ENCODE measurements at regions of chr7 and their contacts with region 1.

Region 1: GRCh38 chr7:66654123-66654732 is 25.5 kb downstream of the KCTD7 start:
- DNase-seq: peak; percentile 98
- ATAC-seq: peak; percentile 93
- H3K4me3 Mint-ChIP-seq: peak overlapping the region; percentile 97
- H3K27ac Mint-ChIP-seq: peak overlapping the region; percentile 97
- H3K4me1 Mint-ChIP-seq: peaks cover 14% of the 10 kb centered on the region
- H3K27me3 Mint-ChIP-seq: no peaks in the 10 kb centered on the region

Region 2: DNA sequence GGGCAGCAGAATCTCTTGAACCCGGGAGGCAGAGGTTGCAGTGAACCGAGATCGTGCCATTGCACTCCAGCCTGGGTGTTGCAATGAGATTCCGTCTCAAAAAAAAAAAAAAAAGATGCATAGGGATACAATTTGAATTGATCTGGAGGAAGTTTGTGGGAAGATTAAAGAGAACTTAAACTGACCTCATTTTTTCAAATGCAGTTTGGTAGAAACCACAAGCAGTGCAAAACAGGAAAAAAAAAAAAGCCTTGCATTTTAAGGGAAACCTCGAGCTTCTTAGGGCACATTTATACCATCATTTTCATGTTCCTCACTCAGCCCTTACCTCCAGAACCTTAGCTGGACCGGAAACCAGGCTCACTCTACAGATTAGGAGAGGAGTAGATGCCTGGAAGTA is 22.8 kb before region 1 on chr7:
- POLR2A ChIA-PET with region 1: interaction called, 17 read pairs
- DNase-seq: no peak
- ATAC-seq: no peak
- H3K4me3 Mint-ChIP-seq: peak overlapping the region; percentile 81
- H3K27ac Mint-ChIP-seq: peak overlapping the region; percentile 94
- H3K4me1 Mint-ChIP-seq: peaks cover 36% of the 10 kb centered on the region
- H3K27me3 Mint-ChIP-seq: no peaks in the 10 kb centered on the region

Region 3: DNA sequence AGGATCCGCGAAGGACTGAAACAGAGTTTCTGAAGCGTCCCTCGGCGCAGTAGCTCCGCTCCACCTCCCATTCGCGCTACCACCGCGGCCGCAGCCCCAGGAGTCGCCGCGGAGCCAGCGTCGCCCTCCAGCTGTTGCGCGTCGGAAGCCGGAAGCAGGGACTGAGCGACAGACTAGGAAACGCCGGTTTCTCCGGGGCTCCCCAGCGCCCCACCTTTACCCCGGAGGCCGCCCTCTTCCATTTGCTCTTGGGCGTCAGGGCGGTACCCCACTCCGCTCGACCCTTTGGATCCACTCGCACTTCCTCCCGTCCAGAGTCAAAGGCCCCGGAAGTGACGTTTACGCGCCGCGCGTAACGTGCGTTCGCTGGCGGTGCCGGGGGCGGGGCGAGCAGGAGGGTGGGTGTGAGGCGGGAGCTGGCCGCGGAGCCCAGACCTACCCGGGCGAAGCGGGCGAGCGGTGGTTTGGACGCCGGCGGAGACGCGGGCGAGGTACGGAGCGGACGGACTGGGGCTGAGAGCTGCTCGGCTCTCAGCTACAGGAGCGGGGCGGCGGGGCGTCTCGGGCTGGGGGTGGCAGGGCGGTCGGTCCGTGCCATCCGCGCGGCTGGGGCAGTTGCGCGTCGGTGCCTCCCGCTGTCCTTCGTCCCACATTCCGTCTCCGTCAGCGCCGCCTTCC is 86.2 kb after region 1 on chr7 and contains the start of gene RABGEF1:
- POLR2A ChIA-PET with region 1: interaction called, 10 read pairs
- DNase-seq: peak; percentile 97
- ATAC-seq: peak; percentile 96
- H3K4me3 Mint-ChIP-seq: peak within 1 kb of the TSS; percentile 96
- H3K27ac Mint-ChIP-seq: peak within 1 kb of the TSS; percentile 99
- H3K4me1 Mint-ChIP-seq: peaks cover 10% of the 10 kb centered on the region
- H3K27me3 Mint-ChIP-seq: no peaks in the 10 kb centered on the region
- total RNA-seq, gene RABGEF1: 24.7 to 25.8 TPM

Measured in activated naive CD8-positive, alpha-beta T cell treated with anti-CD3 and anti-CD28 coated beads, Interleukin-2, amount 10 ng/mL, durations not matched to agents 7 days and 5 days (primary cell).